ENCODE measurements at regions of chr20 and their contacts with region 1.

Region 1: DNA sequence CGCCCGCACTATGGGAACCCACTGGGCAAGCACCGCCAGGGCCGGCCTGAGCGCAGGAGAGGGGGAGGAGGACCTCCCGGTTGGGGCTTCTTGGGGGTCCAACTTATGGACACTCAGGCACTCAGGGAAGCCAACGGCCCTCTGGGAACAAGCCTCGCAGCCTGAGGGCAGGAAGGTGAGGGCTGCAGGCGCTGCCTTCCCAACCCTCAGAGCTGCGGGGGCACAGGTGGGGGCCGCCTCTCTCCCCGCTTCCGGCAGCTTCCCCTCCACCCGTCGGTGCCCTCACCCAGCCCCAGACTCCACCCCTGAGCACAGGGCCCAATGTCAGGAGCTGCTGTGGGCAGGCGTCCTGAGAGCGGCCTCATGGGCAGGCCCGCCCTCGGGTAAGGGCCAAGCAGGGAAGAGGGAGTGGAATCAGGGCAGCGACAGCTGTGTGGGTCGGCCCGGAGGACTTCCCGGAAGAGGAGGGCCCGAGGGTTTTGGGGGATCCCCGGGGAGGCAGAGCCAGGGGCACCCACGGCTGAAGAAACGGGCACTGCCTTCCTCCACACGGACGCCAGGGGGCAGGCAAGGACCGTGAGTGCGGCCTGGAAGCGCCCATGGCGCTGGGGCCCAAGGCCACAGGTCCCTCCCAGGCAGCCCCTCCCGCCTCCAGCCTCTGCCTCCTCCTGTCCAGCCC is 488 bp upstream of the PTK6 start:
- DNase-seq: peak; percentile 92 to 95 (median 93)
- H3K4me3 ChIP-seq: peak overlapping the region in 1 of 2 donors; percentile 56
- H3K4me3 Mint-ChIP-seq: peak overlapping the region; percentile 65 to 85 (median 80)
- H3K27ac ChIP-seq: peak overlapping the region; percentile 68
- H3K27ac Mint-ChIP-seq: peak overlapping the region; percentile 35 to 89 (median 81)
- H3K4me1 ChIP-seq: peaks cover 28% of the 10 kb centered on the region
- H3K4me1 Mint-ChIP-seq: peaks cover 0 to 17% (median 2%) of the 10 kb centered on the region in 4 donors
- H3K27me3 ChIP-seq: no peaks in the 10 kb centered on the region
- H3K27me3 Mint-ChIP-seq: no peaks in the 10 kb centered on the region

Region 2: DNA sequence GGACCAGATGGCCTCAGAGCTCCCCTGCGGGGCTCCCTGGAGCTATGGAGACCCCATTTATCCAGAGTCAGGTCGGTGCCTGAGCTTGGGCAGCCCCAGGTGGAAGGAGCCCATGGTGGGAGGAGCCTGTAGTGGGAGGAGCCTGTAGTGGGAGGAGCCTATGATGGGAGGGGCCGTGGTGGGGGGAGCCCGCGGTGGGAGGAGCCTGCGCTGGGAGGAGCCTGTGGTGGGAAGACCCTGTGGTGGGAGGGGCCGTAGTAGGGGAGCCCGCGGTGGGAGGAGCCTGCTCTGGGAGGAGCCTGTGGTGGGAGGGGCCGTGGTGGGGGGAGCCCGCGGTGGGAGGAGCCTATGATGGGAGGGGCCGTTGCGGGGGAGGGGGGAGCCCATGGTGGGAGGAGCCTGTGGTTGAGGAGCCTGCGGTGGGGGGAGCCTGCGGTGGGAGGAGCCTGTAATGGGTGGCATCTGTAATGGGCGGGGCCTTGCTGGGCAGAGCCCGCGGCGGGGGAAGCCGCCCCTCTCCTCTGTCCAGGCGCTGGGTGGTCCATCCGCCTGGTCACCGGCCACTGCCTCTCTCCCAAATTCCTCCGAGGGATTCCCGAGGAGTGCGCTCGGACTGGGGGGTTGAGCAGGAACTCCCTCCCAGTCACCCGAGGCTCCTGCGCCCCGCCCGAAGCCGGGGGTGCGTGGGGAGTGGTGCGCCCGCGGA is 15.7 kb after region 1 on chr20:
- CTCF ChIA-PET with region 1: interaction called, 33 read pairs
- POLR2A ChIA-PET with region 1: interaction called, 32 read pairs
- intact Hi-C with region 1: loop called (anchors 1 kb)
- DNase-seq: peak; percentile 87 to 93 (median 89)
- H3K4me3 ChIP-seq: peak overlapping the region; percentile 23 to 66
- H3K4me3 Mint-ChIP-seq: peak overlapping the region; percentile 68 to 92 (median 76)
- H3K27ac ChIP-seq: peak overlapping the region; percentile 69
- H3K27ac Mint-ChIP-seq: peak overlapping the region; percentile 93 to 98 (median 97)
- H3K4me1 ChIP-seq: peaks cover 22% of the 10 kb centered on the region
- H3K4me1 Mint-ChIP-seq: peaks cover 5 to 27% (median 14%) of the 10 kb centered on the region in 4 donors
- H3K27me3 ChIP-seq: no peaks in the 10 kb centered on the region
- H3K27me3 Mint-ChIP-seq: peaks cover 0 to 6% of the 10 kb centered on the region in 2 donors

Region 3: DNA sequence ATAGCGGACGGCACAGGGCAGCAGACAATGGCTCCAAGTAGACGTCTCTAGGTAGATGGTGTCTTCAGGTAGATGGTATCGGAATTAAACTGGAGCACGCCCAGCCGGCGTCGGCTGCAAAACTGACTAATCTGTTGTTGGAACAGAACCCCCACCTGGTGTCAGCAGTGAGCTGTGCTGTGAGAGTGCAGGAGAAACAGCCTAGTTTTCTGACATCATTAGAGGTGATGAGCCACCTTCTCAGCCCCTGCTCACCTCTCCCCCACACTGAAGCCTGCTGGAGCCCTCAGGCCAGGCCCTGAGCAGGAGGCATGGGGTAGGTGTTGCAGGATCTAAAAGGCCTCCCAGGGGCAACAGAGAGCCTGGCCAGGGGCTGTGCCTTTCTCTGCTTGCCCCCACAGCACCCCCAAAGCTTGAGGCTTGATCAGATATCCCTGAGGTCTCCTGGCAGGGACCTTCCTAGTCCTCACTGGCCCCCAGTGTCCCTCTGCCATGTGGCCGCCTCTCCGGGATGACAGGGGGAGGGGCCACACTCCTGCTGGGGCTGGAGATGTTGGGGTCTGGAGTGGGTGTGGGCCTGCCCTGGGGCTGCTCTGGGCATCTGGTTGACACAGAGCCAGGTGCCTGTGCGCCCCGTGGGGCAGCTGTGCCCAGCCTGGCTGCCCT is 43.3 kb after region 1 on chr20:
- CTCF ChIA-PET with region 1: interaction called, 6 read pairs
- POLR2A ChIA-PET with region 1: interaction called, 3 read pairs
- intact Hi-C with region 1: loop called (anchors 1 kb)
- DNase-seq: peak; percentile 68 to 82 (median 78)
- H3K4me3 ChIP-seq: no peak overlapping the region
- H3K4me3 Mint-ChIP-seq: peak overlapping the region in 1 of 8 donors; percentile 43
- H3K27ac ChIP-seq: no peak overlapping the region
- H3K27ac Mint-ChIP-seq: peak overlapping the region in 2 of 7 donors; percentile 7 to 16
- H3K4me1 ChIP-seq: peaks cover 3% of the 10 kb centered on the region
- H3K4me1 Mint-ChIP-seq: peaks cover 1 to 13% (median 6%) of the 10 kb centered on the region in 4 donors
- H3K27me3 ChIP-seq: no peaks in the 10 kb centered on the region
- H3K27me3 Mint-ChIP-seq: no peaks in the 10 kb centered on the region

Region 4: GRCh38 chr20:63641792-63642544 is 104.3 kb after region 1 on chr20:
- CTCF ChIA-PET with region 1: interaction called, 20 read pairs
- POLR2A ChIA-PET with region 1: interaction called, 27 read pairs
- intact Hi-C with region 1: loop called (anchors 1 kb)
- DNase-seq: peak; percentile 96 to 98 (median 97)
- H3K4me3 ChIP-seq: peak overlapping the region; percentile 57 to 92
- H3K4me3 Mint-ChIP-seq: peak overlapping the region; percentile 61 to 90 (median 80)
- H3K27ac ChIP-seq: peak overlapping the region; percentile 76
- H3K27ac Mint-ChIP-seq: peak overlapping the region in 4 of 7 donors; percentile 47 to 89 (median 82)
- H3K4me1 ChIP-seq: peaks cover 31% of the 10 kb centered on the region
- H3K4me1 Mint-ChIP-seq: peaks cover 13 to 43% (median 28%) of the 10 kb centered on the region in 4 donors
- H3K27me3 ChIP-seq: no peaks in the 10 kb centered on the region
- H3K27me3 Mint-ChIP-seq: peaks cover 0 to 2% of the 10 kb centered on the region in 2 donors

Region 5: GRCh38 chr20:63739130-63740069 is 201.7 kb after region 1 on chr20 and contains the start of gene SLC2A4RG:
- CTCF ChIA-PET with region 1: interaction called, 4 read pairs
- POLR2A ChIA-PET with region 1: interaction called, 13 read pairs
- intact Hi-C with region 1: no loop called
- DNase-seq: peak; percentile 61 to 76 (median 72)
- H3K4me3 ChIP-seq: peak within 1 kb of the TSS; percentile 42 to 92
- H3K4me3 Mint-ChIP-seq: peak within 1 kb of the TSS; percentile 44 to 91 (median 60)
- H3K27ac ChIP-seq: peak within 1 kb of the TSS; percentile 54
- H3K27ac Mint-ChIP-seq: peak within 1 kb of the TSS in 4 of 7 donors; percentile 22 to 65 (median 43)
- H3K4me1 ChIP-seq: peaks cover 33% of the 10 kb centered on the region
- H3K4me1 Mint-ChIP-seq: peaks cover 6 to 17% (median 10%) of the 10 kb centered on the region in 4 donors
- H3K27me3 ChIP-seq: no peaks in the 10 kb centered on the region
- H3K27me3 Mint-ChIP-seq: no peaks in the 10 kb centered on the region
- total RNA-seq, gene SLC2A4RG: 121 to 124 TPM

Region 6: DNA sequence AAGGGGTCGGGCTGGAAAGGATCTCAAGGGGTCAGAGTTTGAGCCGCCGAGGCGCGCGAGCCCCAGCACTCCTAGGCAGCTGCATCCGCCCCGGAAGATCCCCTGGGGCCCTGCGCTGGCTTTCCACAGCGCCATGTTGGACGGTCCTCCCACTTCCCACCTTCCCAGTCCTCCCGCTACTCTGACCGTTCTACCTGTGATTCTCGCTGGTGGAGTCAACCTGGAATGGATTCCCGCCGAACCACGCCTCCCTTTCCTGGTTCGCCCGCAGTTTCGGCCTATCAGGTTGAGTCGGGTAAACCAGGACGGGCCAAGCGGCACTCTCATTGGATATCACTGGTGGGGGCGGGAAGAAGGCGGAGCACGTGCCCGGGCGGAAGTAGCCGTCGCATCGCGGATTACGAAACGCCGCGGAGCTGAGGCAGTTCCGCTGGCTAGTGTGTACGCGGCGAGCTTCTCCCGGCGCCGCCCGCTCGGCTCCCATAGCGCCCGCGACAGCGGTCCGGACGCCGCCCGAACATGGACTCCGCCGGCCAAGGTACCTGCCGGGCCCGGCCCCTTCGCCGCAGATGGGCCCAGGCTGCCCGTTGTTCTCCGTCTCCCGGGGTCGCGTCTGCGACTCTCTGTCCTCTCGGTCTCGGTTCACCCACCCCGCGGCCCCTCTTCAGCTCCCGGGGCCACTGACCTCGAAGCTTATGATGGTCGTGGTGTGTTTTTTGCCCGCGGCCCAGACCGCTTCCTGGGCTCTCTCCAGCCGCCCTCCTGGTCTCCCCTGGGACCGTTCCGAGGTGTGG is 327.4 kb after region 1 on chr20 and contains the start of gene TPD52L2:
- CTCF ChIA-PET with region 1: interaction called, 15 read pairs
- POLR2A ChIA-PET with region 1: interaction called, 25 read pairs
- intact Hi-C with region 1: loop called (anchors 1 kb)
- DNase-seq: peak; percentile 96 to 99 (median 97)
- H3K4me3 ChIP-seq: peak within 1 kb of the TSS; percentile 81 to 90
- H3K4me3 Mint-ChIP-seq: peak within 1 kb of the TSS; percentile 90 to 99 (median 96)
- H3K27ac ChIP-seq: peak within 1 kb of the TSS; percentile 81
- H3K27ac Mint-ChIP-seq: peak within 1 kb of the TSS; percentile 87 to 99 (median 96)
- H3K4me1 ChIP-seq: peaks cover 29% of the 10 kb centered on the region
- H3K4me1 Mint-ChIP-seq: peaks cover 15 to 48% (median 29%) of the 10 kb centered on the region in 4 donors
- H3K27me3 ChIP-seq: no peaks in the 10 kb centered on the region
- H3K27me3 Mint-ChIP-seq: no peaks in the 10 kb centered on the region
- total RNA-seq, gene TPD52L2: 44.4 to 44.9 TPM